ENCODE measurements at regions of chr13 and their contacts with region 1.

Region 1: DNA sequence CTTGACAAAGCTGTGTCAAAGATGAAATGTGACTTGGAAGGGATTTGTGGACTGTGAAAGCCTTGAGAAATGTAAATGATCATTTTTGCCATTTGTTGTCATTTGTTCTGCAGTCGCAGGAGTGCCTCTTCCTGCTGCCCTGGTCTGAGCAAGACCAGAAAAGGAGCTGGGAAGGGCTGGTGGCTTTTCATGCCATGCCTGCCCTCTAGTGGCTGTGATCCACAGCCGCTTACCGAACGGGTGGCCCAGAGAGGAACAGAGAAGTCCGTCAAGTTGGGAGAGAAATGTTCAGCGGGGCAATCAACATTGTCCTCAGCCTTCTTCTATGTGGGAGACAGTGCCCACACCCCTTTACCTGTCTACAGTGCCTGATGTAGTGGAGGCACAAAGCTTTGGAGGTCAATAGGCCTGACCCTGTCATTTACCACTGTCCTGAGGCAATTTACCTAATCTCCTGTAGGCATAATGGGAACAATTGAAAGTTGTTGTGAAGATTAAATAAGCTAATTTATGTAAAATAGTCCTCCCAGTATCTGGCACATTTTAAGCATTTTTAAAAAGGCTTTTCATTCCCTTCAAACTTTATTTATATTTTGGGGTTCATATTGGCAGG is 224.4 kb downstream of the B3GLCT start:
- DNase-seq: peak; percentile 2 to 52 (median 17)
- ATAC-seq: peak; percentile 87
- H3K4me3 ChIP-seq: no peak overlapping the region
- H3K4me3 Mint-ChIP-seq: no peak overlapping the region
- H3K27ac ChIP-seq: no peak overlapping the region
- H3K27ac Mint-ChIP-seq: no peak overlapping the region
- H3K4me1 ChIP-seq: no peaks in the 10 kb centered on the region
- H3K4me1 Mint-ChIP-seq: peaks cover 0 to 5% (median 0%) of the 10 kb centered on the region in 7 donors
- H3K27me3 ChIP-seq: no peaks in the 10 kb centered on the region
- H3K27me3 Mint-ChIP-seq: peaks cover 0 to 13% (median 10%) of the 10 kb centered on the region in 5 donors

Region 2: GRCh38 chr13:30978981-30979956 is 445.0 kb before region 1 on chr13:
- CTCF ChIA-PET with region 1: no interaction called
- POLR2A ChIA-PET with region 1: no interaction called
- intact Hi-C with region 1: loop called (anchors 10 kb)
- DNase-seq: peak in 5 of 9 donors; percentile 1 to 56 (median 8)
- ATAC-seq: no peak
- H3K4me3 ChIP-seq: no peak overlapping the region
- H3K4me3 Mint-ChIP-seq: no peak overlapping the region
- H3K27ac ChIP-seq: no peak overlapping the region
- H3K27ac Mint-ChIP-seq: no peak overlapping the region
- H3K4me1 ChIP-seq: no peaks in the 10 kb centered on the region
- H3K4me1 Mint-ChIP-seq: peaks cover 0 to 1% (median 0%) of the 10 kb centered on the region in 7 donors
- H3K27me3 ChIP-seq: no peaks in the 10 kb centered on the region
- H3K27me3 Mint-ChIP-seq: peaks cover 4 to 25% (median 14%) of the 10 kb centered on the region in 5 donors

Region 3: DNA sequence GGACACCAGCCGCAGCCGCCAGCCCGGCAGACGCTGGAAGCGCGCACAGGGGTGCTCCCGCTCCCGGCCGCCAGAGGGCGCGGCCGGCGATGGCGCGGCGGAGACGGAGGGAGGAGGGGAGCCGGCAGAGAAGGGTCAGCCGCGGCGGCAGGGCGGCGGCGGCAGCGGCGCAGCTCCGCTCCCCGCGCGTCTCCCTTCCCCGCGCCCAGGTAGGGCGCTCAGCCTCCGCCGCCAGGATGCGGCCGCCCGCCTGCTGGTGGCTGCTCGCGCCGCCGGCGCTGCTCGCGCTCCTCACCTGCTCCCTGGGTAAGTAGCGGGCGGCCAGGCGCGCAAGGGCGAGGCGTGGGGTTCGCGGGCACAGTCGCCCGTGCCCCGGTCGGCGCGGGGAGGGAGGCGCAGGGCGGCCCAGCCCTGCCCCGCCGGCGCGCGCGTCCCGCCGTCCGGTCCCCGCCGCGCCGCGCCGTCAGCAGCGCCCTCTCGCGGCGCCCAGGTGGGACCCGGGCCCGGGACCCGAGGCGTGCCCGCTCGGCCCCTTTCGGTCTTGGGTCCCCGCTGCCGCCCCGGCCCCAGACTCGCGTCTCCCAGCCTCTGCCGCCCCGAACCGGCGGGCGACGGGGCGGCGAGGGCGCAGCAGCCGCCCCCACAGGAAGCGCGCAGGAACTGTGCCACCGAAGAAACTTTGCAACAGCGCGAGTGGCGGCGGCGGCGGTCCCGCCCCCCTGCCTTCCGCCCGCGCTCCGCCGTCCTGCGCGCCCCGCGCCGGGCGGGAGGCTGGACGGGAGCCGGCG is 224.2 kb before region 1 on chr13 and contains the start of gene B3GLCT:
- CTCF ChIA-PET with region 1: interaction called, 3 read pairs
- POLR2A ChIA-PET with region 1: no interaction called
- intact Hi-C with region 1: loop called (anchors 1 kb)
- DNase-seq: peak; percentile 70 to 90 (median 86)
- ATAC-seq: peak; percentile 88
- H3K4me3 ChIP-seq: peak within 1 kb of the TSS; percentile 65
- H3K4me3 Mint-ChIP-seq: peak within 1 kb of the TSS; percentile 83 to 92 (median 89)
- H3K27ac ChIP-seq: peak within 1 kb of the TSS; percentile 82
- H3K27ac Mint-ChIP-seq: peak within 1 kb of the TSS; percentile 78 to 94 (median 92)
- H3K4me1 ChIP-seq: peaks cover 5 to 6% of the 10 kb centered on the region in 2 donors
- H3K4me1 Mint-ChIP-seq: peaks cover 13 to 28% (median 23%) of the 10 kb centered on the region in 7 donors
- H3K27me3 ChIP-seq: no peaks in the 10 kb centered on the region
- H3K27me3 Mint-ChIP-seq: peaks cover 0 to 19% (median 0%) of the 10 kb centered on the region in 5 donors
- total RNA-seq, gene B3GLCT: 3.7 to 4.6 (median 4.4) TPM

Region 4: GRCh38 chr13:31236211-31236786 is 187.9 kb before region 1 on chr13:
- CTCF ChIA-PET with region 1: no interaction called
- POLR2A ChIA-PET with region 1: no interaction called
- intact Hi-C with region 1: loop called in 1 of 2 experiments (anchors 1 kb)
- DNase-seq: peak in 3 of 9 donors; percentile 2 to 10 (median 9)
- ATAC-seq: no peak
- H3K4me3 ChIP-seq: no peak overlapping the region
- H3K4me3 Mint-ChIP-seq: no peak overlapping the region
- H3K27ac ChIP-seq: no peak overlapping the region
- H3K27ac Mint-ChIP-seq: no peak overlapping the region
- H3K4me1 ChIP-seq: no peaks in the 10 kb centered on the region
- H3K4me1 Mint-ChIP-seq: peaks cover 0 to 1% (median 0%) of the 10 kb centered on the region in 7 donors
- H3K27me3 ChIP-seq: no peaks in the 10 kb centered on the region
- H3K27me3 Mint-ChIP-seq: no peaks in the 10 kb centered on the region

Region 5: GRCh38 chr13:31352467-31352866 is 71.8 kb before region 1 on chr13:
- CTCF ChIA-PET with region 1: no interaction called
- POLR2A ChIA-PET with region 1: no interaction called
- intact Hi-C with region 1: no loop called
- DNase-seq: no peak
- ATAC-seq: no peak
- H3K4me3 ChIP-seq: no peak overlapping the region
- H3K4me3 Mint-ChIP-seq: no peak overlapping the region
- H3K27ac ChIP-seq: no peak overlapping the region
- H3K27ac Mint-ChIP-seq: no peak overlapping the region
- H3K4me1 ChIP-seq: no peaks in the 10 kb centered on the region
- H3K4me1 Mint-ChIP-seq: no peaks in the 10 kb centered on the region
- H3K27me3 ChIP-seq: no peaks in the 10 kb centered on the region
- H3K27me3 Mint-ChIP-seq: peaks cover 4 to 38% (median 20%) of the 10 kb centered on the region in 5 donors

Measured in naive thymus-derived CD4-positive, alpha-beta T cell (primary cell).